ENCODE measurements at regions of chr11 and their contacts with region 1.

Region 1: DNA sequence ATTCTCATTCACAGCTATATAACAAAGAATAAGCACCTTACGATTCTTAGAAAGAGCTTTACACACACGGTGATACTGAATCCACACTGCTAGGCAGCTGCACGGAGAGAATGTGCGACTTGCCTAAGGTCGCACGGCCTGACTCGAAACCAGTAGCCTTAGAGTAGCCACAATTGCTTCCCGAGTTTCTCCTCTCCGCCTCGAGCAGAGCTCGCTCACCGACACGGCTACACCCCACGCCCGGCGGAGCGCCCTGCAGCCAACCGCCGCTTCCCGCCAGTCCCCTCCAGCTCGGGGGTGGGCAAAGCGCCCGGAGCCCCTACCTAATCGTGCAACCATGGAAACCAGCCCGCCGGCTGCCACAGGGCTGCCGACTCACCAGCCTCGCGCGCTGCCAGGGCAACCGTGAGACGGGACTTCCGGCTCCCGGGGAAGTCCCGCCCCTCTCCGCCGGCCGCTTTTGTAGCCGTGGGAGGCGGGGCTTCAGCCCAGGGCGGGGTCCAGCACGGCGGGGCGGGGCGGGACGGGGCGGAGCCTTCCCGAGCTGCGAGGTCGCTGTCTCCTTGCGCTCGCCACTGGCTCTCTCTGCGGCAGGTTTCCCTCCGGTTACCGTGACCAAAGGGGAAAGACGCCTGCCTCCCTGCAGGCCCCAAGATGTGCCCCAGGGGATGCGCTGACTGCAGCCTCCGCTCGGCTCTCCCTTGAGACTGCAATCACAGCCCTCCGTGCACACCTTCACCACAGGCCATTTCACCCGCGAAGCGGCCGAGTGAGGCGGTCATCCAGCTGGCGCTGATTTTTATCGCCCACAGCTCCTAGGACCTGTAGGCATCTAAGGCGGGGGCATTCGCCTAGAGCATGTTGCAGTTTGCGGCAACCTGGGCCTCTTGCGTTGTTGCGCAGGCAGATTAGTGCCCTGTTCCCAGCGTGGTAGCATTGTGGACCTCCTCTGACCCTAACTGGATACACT is 1.1 kb downstream of the BSCL2 start:
- DNase-seq: peak; percentile 89
- H3K4me3 Mint-ChIP-seq: peak overlapping the region; percentile 89
- H3K27ac Mint-ChIP-seq: peak overlapping the region; percentile 79
- H3K4me1 Mint-ChIP-seq: peaks cover 49% of the 10 kb centered on the region
- H3K27me3 Mint-ChIP-seq: no peaks in the 10 kb centered on the region

Region 2: DNA sequence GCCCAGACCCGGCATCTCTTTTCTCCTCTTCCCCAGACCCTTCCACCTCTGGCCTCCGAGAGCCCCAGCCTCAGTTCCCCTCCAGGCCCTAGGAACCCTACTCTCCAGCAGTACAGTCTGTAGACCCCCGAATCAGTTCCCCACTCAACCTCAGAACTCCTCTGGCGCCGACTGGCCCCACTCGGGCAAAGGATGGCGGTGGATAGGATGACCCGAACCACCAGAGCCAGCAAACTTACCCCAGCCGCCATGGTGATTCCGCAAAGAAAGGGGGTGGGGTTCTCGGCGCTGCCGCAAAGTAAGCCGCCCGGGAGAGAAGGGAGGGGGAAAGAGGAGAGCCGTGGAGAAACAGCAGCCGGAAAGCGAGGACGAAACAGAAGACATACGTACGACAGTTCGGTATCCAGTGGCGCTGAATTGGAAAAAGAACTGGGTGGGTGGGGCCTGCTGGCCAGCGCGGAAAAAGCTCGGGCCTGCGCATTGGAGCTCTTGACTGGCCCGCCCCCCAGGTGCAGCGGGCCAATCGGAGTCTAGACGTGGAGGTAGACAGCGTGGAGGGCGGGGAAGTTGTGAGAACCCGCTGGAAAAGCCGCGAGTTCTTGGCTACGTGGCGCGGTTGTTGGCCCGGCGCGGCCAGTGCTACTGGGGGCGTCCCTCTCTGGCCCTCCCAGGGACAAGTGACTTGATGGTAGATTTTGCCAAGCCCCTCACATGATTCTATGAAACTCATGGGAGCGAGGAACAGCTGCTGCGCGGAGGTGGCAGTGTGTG is 132.4 kb before region 1 on chr11 and contains the start of gene EEF1G:
- intact Hi-C with region 1: loop called (anchors 1 kb)
- DNase-seq: peak; percentile 99
- H3K4me3 Mint-ChIP-seq: peak within 1 kb of the TSS; percentile 98
- H3K27ac Mint-ChIP-seq: peak within 1 kb of the TSS; percentile 92
- H3K4me1 Mint-ChIP-seq: peaks cover 37% of the 10 kb centered on the region
- H3K27me3 Mint-ChIP-seq: no peaks in the 10 kb centered on the region
- total RNA-seq, gene EEF1G: 1,154 and 1,169 TPM in 2 replicates

Region 3: GRCh38 chr11:62665075-62665598 is 41.0 kb before region 1 on chr11 and contains the starts of genes C11orf98 and CSKMT:
- intact Hi-C with region 1: loop called (anchors 2 kb)
- DNase-seq: peak; percentile 97
- H3K4me3 Mint-ChIP-seq: peak within 1 kb of the TSS; percentile 98
- H3K27ac Mint-ChIP-seq: peak within 1 kb of the TSS; percentile 81
- H3K4me1 Mint-ChIP-seq: peaks cover 33% of the 10 kb centered on the region
- H3K27me3 Mint-ChIP-seq: no peaks in the 10 kb centered on the region
- total RNA-seq, gene C11orf98: 146 and 151 TPM in 2 replicates
- total RNA-seq, gene CSKMT: 65.0 and 69.4 TPM in 2 replicates

Region 4: DNA sequence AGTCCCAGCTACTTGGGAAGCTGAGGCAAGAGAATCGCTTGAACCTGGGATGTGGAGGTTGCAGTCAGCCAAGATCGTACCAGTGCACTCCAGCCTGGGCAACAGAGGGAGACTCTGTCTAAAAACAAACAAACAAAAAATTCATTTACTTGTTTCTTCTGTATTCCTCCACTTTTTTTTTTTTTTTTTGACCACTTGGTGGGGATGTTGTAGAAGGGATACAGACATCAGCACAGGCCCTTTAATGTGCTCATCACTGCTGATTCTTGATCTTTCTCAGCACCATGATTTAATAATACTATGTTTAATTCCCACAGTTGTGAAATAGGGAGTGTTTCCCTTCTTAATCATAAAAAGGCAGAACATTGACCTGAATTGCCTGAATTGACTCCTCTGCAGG is 26.6 kb after region 1 on chr11:
- intact Hi-C with region 1: no loop called
- DNase-seq: no peak
- H3K4me3 Mint-ChIP-seq: no peak overlapping the region
- H3K27ac Mint-ChIP-seq: peak overlapping the region; percentile 40
- H3K4me1 Mint-ChIP-seq: peaks cover 15% of the 10 kb centered on the region
- H3K27me3 Mint-ChIP-seq: no peaks in the 10 kb centered on the region

Region 5: DNA sequence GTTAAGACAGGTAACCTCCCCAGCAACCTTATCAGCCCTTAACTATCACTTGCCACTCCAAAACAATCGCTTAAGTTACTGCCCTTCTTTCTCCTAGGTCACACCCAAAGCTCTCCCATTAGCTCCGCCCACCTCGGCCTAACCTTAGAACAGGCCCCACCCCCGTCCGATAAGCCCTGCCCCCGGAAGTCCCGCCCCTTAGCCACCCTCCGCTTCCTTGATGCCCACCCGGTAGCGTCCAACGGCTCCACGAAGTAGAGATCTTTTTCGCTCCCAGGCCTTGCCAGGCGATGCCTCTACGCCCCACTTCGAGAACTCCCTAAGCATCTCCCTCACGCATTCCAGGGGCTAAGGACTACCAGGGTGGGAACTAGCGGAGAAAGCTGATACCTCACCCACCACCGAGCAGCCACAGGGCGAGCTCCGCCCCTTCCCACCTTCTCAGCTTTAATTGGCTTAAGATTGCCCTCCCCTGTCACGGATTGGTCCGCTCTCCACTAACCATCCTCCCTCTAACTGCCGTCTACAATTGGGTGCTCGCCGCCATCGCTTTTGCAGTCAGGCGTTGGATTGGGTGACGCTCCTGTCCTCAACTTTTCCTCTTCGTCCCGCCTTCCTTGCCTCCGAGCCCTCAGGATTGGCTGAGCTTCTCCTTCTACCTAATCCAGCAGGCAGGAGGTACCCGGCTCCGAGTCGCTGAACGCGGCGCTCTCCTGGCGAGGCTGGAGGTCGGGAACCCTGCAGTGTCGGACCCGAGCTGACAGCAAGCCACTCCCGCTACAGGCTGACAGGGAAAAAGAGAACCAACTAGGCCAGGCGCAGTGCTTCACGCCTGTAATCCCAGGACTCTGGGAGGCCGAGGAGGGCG is 47.8 kb after region 1 on chr11 and contains the start of gene ZBTB3:
- intact Hi-C with region 1: loop called (anchors 1 kb)
- DNase-seq: peak; percentile 95
- H3K4me3 Mint-ChIP-seq: peak within 1 kb of the TSS; percentile 89
- H3K27ac Mint-ChIP-seq: peak within 1 kb of the TSS; percentile 91
- H3K4me1 Mint-ChIP-seq: peaks cover 12% of the 10 kb centered on the region
- H3K27me3 Mint-ChIP-seq: no peaks in the 10 kb centered on the region
- total RNA-seq, gene ZBTB3: 8.7 and 9.1 TPM in 2 replicates

Region 6: GRCh38 chr11:62831520-62832335 is 125.6 kb after region 1 on chr11 and contains the start of gene STX5:
- intact Hi-C with region 1: loop called (anchors 1 kb)
- DNase-seq: peak; percentile 99
- H3K4me3 Mint-ChIP-seq: peak within 1 kb of the TSS; percentile 93
- H3K27ac Mint-ChIP-seq: peak within 1 kb of the TSS; percentile 99
- H3K4me1 Mint-ChIP-seq: peaks cover 41% of the 10 kb centered on the region
- H3K27me3 Mint-ChIP-seq: no peaks in the 10 kb centered on the region
- total RNA-seq, gene STX5: 34.2 and 39.9 TPM in 2 replicates

Region 7: DNA sequence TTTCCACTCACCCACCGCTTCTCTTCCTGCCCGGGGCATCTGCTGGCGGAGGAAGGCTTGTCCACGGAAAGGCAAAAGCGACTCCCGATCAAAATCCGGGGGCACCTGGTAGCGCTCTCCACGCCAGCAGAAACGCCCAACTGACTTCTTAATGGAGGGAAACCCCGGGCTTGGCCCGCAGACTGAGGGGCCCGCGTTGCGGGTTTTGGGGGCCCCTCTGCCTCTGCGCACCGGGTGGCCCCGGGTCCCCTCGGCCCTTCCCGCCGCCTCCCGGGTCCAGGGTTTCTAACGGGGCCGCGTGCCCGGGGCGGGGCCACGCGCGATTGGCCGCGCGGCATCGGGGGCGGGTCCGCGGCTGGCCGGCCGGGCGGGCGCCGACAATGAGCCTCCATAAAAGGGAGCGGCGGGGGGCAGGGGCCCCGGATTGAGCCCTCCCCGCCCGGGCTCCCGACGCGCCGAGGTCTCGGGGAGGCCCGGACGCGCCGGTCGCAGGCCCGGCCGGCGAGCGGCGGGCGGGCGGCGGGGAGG is 1106.9 kb after region 1 on chr11 and contains the start of gene SPINDOC:
- intact Hi-C with region 1: no loop called
- DNase-seq: peak; percentile 78
- H3K4me3 Mint-ChIP-seq: peak within 1 kb of the TSS; percentile 88
- H3K27ac Mint-ChIP-seq: peak within 1 kb of the TSS; percentile 55
- H3K4me1 Mint-ChIP-seq: peaks cover 34% of the 10 kb centered on the region
- H3K27me3 Mint-ChIP-seq: no peaks in the 10 kb centered on the region
- total RNA-seq, gene SPINDOC: 60.0 and 64.3 TPM in 2 replicates